Esophagus muscularis mucosa (tissue), 4 donors: ENCODE measurements at regions of chr1 and their contacts with region 1.

Region 1: DNA sequence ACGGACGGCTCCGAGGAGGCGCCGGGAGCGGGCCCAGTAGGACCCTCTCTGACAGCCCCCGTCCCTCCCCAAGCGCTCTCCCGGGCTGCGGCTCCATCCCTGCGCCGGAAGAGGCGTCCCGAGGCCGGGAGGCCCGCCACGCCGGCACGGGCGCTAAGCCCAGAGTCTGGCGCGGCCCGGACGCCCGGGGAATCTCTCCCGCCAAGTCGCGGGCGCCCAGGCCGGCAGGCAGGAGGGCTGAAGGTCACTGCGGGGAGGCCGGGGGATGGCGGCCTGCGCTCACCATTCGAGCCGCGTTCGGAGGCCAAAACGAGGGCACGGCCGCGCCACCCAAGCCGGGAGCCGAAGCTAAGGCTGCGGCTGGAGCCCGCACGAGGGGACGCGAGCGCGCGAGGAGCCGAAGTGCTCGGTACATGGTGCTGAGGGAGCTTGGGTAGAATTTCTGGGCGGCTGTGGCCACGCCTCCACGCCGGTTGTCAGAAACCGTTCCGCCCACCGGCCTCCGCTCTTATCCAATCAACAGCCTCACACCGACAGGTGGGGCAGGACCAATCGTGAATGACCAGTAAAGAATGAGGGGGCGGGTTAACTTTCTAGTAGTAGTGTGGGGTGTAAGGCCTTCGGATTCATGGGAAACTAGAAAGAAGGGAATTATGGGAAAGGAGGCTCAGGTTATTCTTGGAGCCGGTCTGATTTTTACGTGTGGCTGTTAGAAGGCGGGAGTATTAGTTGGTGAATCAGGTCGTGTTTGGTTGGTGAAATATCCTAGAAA is at the start of gene FH:
- DNase-seq: peak; percentile 99
- H3K4me3 ChIP-seq: peak within 1 kb of the TSS; percentile 71 to 90 (median 88)
- H3K27ac ChIP-seq: peak within 1 kb of the TSS; percentile 86 to 96 (median 92)
- H3K4me1 ChIP-seq: peaks cover 0 to 26% (median 22%) of the 10 kb centered on the region in 4 donors
- H3K27me3 ChIP-seq: no peaks in the 10 kb centered on the region
- CTCF ChIP-seq: no peak
- EP300 ChIP-seq: no peak
- POLR2A ChIP-seq: peak; percentile 21
- total RNA-seq, gene FH: 63.6 to 83.4 (median 69.1) TPM

Region 2: GRCh38 chr1:241171991-241172390 is 347.5 kb before region 1 on chr1:
- intact Hi-C with region 1: no loop called
- DNase-seq: no peak
- H3K4me3 ChIP-seq: no peak overlapping the region
- H3K27ac ChIP-seq: no peak overlapping the region
- H3K4me1 ChIP-seq: no peaks in the 10 kb centered on the region
- H3K27me3 ChIP-seq: no peaks in the 10 kb centered on the region
- CTCF ChIP-seq: no peak
- EP300 ChIP-seq: no peak
- POLR2A ChIP-seq: no peak

Region 3: GRCh38 chr1:241640029-241640818 is 120.7 kb after region 1 on chr1 and contains the starts of genes CHML and OPN3:
- intact Hi-C with region 1: loop called (anchors 5 kb)
- DNase-seq: peak; percentile 96
- H3K4me3 ChIP-seq: peak within 1 kb of the TSS; percentile 81 to 93 (median 91)
- H3K27ac ChIP-seq: peak within 1 kb of the TSS; percentile 82 to 87 (median 84)
- H3K4me1 ChIP-seq: peaks cover 3 to 37% (median 31%) of the 10 kb centered on the region in 4 donors
- H3K27me3 ChIP-seq: no peaks in the 10 kb centered on the region
- CTCF ChIP-seq: peak in 1 of 3 experiments; percentile 17
- EP300 ChIP-seq: no peak
- POLR2A ChIP-seq: no peak
- total RNA-seq, gene CHML: 4.6 to 8.2 (median 5.0) TPM
- total RNA-seq, gene OPN3: 5.3 to 12.4 (median 8.0) TPM

Region 4: GRCh38 chr1:241834733-241835377 is 315.4 kb after region 1 on chr1:
- intact Hi-C with region 1: no loop called
- DNase-seq: no peak
- H3K4me3 ChIP-seq: no peak overlapping the region
- H3K27ac ChIP-seq: no peak overlapping the region
- H3K4me1 ChIP-seq: no peaks in the 10 kb centered on the region
- H3K27me3 ChIP-seq: peaks cover 0 to 4% (median 0%) of the 10 kb centered on the region in 4 donors
- CTCF ChIP-seq: peak in 1 of 3 experiments; percentile 30
- EP300 ChIP-seq: no peak
- POLR2A ChIP-seq: no peak